AG04449 (cell line): ENCODE measurements at regions of chr12 and their contacts with region 1.

Region 1: GRCh38 chr12:51341259-51342007 is 5.0 kb downstream of the CELA1 start:
- DNase-seq: no peak
- H3K4me3 ChIP-seq: peak overlapping the region; percentile 41
- CTCF ChIP-seq: peak; percentile 89

Region 2: GRCh38 chr12:51025836-51026638 is 315.4 kb before region 1 on chr12 and contains the start of gene SLC11A2:
- CTCF ChIA-PET with region 1: interaction called, 13 read pairs
- POLR2A ChIA-PET with region 1: no interaction called
- DNase-seq: peak; percentile 59
- H3K4me3 ChIP-seq: peak within 1 kb of the TSS; percentile 95
- CTCF ChIP-seq: no peak

Region 3: GRCh38 chr12:51217968-51218606 is 123.3 kb before region 1 on chr12 and contains the start of gene POU6F1:
- CTCF ChIA-PET with region 1: interaction called, 27 read pairs
- POLR2A ChIA-PET with region 1: no interaction called
- DNase-seq: no peak
- H3K4me3 ChIP-seq: peak within 1 kb of the TSS; percentile 77
- CTCF ChIP-seq: peak; percentile 68

Region 4: DNA sequence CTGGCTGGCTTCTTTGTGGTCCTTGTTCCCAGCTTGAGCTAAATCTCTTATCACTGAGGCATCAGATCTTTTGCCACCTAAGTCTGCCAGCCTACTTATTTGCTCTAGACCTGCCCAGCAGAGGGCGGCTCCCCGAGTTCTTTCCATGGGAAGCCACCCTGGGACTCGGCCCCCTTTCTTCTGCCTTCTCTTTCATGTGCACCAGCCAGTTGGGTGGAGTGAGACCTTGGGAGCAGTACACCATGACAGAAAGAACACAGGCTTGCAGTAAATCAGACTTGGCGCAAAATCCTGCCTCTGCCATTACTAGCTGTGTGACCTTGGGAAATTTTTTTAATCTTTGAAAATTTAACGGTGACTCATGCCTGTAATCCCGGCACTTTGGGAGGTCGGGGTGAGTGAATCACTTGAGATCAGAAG is 78.7 kb before region 1 on chr12:
- CTCF ChIA-PET with region 1: interaction called, 92 read pairs
- POLR2A ChIA-PET with region 1: no interaction called
- DNase-seq: no peak
- H3K4me3 ChIP-seq: no peak overlapping the region
- CTCF ChIP-seq: no peak

Region 5: DNA sequence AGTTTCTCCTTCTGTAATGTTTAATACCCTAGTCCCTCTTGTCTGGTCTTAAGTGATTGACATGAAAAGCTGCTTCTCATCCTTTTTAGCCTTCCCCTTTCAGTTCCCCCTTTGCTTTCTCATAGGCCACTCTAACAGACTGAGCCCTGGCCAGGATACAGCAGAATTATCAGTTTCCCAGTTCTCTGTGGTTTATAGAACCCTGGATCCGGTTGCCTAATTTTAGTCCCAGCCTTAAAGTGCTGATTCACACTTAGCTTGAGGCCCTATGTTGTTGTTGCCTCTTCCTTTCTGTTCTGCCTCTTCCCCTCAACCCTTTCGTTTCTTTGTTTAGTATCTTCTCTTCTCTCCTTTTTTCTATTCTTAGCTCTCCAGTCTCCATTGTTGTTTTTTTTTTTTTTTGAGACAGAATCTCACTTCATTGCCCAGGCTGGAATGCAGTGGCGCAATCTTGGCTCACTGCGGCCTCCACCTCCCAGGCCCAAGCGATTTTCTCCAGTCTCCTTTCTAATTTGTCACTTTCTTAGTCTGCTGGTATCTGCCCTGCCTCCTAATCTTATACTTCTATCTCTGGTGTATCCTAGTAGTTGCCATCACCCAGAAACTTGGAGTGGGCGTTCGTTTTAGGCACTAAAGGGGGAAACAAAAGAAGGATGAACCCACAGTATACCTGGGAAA is 14.5 kb before region 1 on chr12:
- CTCF ChIA-PET with region 1: interaction called, 40 read pairs
- POLR2A ChIA-PET with region 1: no interaction called
- DNase-seq: no peak
- H3K4me3 ChIP-seq: no peak overlapping the region
- CTCF ChIP-seq: no peak

Region 6: DNA sequence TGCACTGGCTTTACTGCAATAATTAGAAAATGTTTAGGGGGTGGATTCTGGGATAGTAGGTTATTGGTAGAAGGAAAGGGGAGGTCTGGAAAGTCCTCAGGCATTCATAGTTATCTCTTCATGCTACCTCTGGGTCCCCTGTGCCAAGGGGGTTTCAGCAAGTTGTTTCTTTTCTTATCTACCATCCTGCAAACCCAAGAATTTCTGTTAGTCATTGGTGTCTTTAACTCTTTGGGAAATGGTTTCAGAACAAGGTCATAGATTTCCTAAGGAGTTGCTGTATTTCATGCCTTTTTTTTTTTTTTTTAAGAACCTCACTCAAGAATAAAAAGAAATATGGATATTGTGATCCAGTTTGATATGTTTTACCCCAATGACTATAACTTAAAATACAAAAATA is 146.8 kb after region 1 on chr12:
- CTCF ChIA-PET with region 1: no interaction called
- POLR2A ChIA-PET with region 1: no interaction called
- DNase-seq: no peak
- H3K4me3 ChIP-seq: no peak overlapping the region
- CTCF ChIP-seq: no peak